PC-9 (cell line): ENCODE measurements at regions of chr11 and their contacts with region 1.

Region 1: DNA sequence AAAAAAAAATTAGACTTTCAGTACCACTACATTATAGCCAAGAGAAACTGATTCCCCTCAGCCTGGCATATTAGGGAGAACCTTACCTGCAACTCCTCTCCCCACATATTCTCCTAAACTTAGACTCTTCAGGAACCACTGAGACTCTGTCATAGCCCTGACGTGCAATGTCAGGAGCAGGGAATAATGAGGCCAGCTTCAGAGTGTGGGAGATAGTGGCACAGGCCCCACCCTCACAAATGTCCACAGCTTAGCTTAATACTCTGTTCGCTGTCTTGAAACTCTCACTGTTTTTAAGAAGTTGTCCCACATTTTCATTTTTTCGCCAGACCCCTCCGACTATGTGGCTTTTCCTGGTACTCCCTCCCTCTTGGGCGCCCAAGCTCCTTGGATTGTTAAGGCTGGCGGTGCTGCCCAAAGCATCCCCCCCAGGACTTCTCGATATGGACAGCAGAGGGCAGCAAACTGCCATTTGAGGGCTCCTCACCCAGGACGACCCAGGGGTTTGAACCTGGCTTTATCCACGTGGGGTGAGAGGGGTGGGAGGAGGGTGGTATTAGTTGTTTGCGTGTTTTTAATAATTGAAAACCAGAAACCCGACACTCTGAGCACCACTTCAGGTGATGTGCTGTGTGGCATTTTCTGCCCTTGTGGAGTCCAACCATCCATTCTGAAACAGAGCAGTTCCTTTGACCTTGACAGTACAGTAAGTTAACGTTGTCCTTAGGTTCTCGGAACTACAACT is 45.2 kb upstream of the RASSF10 start:
- DNase-seq: peak in 1 of 2 experiments; percentile 55
- H3K4me3 ChIP-seq: no peak overlapping the region
- H3K27ac ChIP-seq: no peak overlapping the region
- H3K4me1 ChIP-seq: no peaks in the 10 kb centered on the region
- H3K27me3 ChIP-seq: no peaks in the 10 kb centered on the region
- CTCF ChIP-seq: peak; percentile 87

Region 2: GRCh38 chr11:12922980-12923507 is 40.9 kb before region 1 on chr11:
- CTCF ChIA-PET with region 1: no interaction called
- POLR2A ChIA-PET with region 1: no interaction called
- intact Hi-C with region 1: no loop called
- DNase-seq: no peak
- H3K4me3 ChIP-seq: no peak overlapping the region
- H3K27ac ChIP-seq: no peak overlapping the region
- H3K4me1 ChIP-seq: no peaks in the 10 kb centered on the region
- H3K27me3 ChIP-seq: no peaks in the 10 kb centered on the region
- CTCF ChIP-seq: no peak

Region 3: DNA sequence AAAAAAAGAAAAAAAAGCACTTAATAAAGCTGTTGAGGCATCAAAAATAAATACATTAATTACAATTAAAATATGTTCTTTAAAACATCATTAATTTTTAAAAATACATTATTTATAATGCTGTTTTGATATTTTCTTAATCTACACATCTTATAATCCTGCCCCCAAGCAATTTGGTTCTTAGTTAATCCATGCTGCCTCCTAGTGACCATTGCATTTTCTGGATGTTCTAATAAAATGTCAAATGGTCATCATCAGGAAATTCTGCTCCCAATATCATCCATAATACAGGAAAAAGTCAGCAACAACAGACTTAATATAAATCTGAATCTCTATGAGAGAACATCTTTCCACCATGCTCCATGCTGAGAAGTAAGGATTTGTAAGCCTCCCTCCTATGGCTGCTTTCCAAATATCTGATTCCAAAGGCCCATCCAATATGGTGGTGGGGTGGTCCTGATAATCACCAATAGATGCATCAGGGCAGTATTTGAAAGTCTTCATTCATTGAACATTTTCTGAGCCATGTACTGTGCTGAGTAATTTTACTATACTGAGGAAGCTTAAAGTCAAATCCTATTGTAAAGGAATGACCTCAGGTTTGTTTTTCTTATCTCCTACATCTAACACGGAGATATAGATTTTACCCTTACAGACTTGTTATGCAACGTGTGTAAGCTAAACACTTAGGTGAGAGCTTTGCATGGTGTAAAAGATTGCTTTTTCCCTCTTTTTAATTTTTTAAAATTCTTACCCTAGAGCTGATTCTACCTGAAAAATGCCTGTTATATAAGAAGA is 189.0 kb after region 1 on chr11:
- CTCF ChIA-PET with region 1: interaction called, 3 read pairs
- POLR2A ChIA-PET with region 1: no interaction called
- intact Hi-C with region 1: loop called (anchors 2 kb)
- DNase-seq: no peak
- H3K4me3 ChIP-seq: no peak overlapping the region
- H3K27ac ChIP-seq: no peak overlapping the region
- H3K4me1 ChIP-seq: 0 out of 2 replicates have a peak, but pooled peaks cover 7% of the 10 kb centered on the region
- H3K27me3 ChIP-seq: no peaks in the 10 kb centered on the region
- CTCF ChIP-seq: peak; percentile 48

Region 4: DNA sequence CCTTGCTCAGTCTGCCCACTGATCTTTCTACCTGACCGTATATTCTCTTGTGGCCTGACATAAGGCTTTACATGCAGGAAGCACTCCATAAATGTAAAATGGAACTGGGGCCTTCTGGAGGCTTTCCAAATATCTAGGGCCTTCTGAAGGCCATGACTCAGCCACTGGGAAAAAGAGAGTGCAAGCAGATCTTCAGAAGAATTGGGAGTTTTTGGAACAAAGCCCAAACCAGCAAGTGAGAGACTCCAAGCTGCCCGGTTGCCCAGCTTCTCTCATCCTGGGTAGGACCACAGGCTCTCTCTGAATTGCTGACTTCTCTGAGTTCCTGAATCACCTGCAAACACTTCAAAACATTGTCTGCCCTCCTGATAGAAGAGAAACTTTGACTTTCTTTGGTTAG is 205.7 kb after region 1 on chr11:
- CTCF ChIA-PET with region 1: interaction called, 7 read pairs
- POLR2A ChIA-PET with region 1: interaction called, 5 read pairs
- intact Hi-C with region 1: loop called (anchors 5 kb)
- DNase-seq: peak; percentile 32 to 50
- H3K4me3 ChIP-seq: no peak overlapping the region
- H3K27ac ChIP-seq: no peak overlapping the region
- H3K4me1 ChIP-seq: peaks cover 21% of the 10 kb centered on the region
- H3K27me3 ChIP-seq: no peaks in the 10 kb centered on the region
- CTCF ChIP-seq: no peak

Region 5: GRCh38 chr11:13183094-13183825 is 219.3 kb after region 1 on chr11:
- CTCF ChIA-PET with region 1: interaction called, 6 read pairs
- POLR2A ChIA-PET with region 1: no interaction called
- intact Hi-C with region 1: loop called (anchors 1 kb)
- DNase-seq: peak; percentile 22 to 66
- H3K4me3 ChIP-seq: peak overlapping the region; percentile 39; the same call in 1 of the 2 replicates
- H3K27ac ChIP-seq: peak overlapping the region; percentile 42
- H3K4me1 ChIP-seq: peaks cover 12% of the 10 kb centered on the region; the same call in 1 of the 2 replicates
- H3K27me3 ChIP-seq: no peaks in the 10 kb centered on the region
- CTCF ChIP-seq: peak; percentile 56

Region 6: DNA sequence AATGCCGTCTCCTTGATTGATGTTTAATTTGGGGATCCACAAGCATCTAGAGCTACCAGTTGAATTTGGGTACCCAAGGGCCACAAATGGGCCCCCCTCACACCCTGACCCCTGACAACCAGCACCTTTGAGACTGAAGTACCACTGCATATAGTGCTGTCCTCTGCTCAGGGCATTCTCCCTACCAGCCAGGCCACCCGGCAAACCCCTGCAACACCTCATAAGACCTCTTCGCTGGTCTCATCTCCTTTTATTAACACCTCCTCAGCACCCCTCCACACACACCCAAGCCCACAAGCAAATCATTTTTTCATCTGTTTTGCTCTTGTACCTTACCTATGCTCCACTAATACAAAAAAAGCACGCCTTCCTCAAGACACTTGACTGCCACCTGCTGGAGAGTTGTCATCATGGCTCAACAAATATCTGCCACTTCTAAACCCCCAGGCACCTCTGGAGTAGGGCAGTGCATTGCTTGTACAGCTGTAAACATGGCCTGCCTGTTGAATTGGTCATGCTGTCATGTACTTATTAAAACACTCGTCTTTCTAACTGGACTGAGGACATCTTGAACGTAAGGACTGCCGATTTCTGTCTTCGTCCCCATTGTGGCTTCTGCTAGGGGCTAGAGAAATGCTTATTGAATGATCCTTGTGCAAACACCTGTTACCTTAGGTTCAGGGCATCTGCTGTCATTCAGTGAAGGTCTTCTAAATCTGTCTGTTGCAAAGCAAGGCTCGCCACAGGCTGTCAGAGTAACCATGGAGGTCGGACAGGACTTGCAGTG is 380.2 kb after region 1 on chr11:
- CTCF ChIA-PET with region 1: no interaction called
- POLR2A ChIA-PET with region 1: no interaction called
- intact Hi-C with region 1: loop called (anchors 10 kb)
- DNase-seq: peak; percentile 49 to 59
- H3K4me3 ChIP-seq: no peak overlapping the region
- H3K27ac ChIP-seq: no peak overlapping the region
- H3K4me1 ChIP-seq: peaks cover under 1% of the 10 kb centered on the region; the same call in 1 of the 2 replicates
- H3K27me3 ChIP-seq: no peaks in the 10 kb centered on the region
- CTCF ChIP-seq: peak; percentile 82